ENCODE measurements at regions of chr15 and their contacts with region 1.

Region 1: DNA sequence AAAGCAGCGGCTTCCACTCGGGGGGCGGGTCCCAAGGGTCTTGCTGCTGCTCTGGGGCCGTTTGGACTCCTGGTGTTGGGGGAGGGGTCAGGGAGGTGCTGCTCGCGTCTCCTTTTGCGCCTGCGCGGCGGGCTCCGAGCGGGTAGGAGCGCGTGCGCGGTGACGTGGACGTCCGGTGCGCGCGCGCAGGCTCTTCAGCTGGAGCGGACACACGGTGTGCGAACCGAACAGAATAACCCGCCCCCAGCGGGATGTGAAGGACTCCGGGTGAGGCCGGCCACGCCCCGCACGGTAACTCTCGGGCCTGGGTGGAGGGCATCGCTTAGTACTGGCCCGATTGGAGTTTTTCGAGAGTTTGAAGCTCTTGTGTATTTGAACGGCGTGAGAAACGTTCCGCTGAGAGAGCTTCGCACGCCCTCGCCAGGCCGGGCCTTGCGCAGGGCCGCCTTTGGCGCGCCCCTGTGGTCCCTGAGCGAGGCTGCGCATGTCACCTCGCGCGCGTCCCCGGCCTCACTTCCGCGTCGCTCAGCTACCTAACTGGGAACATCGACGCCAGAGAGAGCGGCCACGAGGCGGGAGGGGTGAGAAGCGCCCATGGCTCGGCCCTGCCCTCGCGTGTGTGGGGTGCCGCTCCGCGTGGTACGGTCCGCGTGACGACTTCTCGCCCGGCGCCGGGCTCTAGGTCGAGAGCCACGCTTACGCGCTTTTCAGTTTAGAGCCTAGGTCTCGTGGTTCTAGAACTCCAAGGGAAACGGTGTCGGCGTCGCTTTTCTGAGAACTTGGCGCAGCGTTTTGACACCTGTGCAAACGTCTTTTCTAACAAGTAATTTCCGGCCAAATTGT is at the start of gene MGA:
- DNase-seq: peak; percentile 86 to 93 (median 91)
- ATAC-seq: peak; percentile 87
- H3K4me3 ChIP-seq: peak within 1 kb of the TSS; percentile 64
- H3K4me3 Mint-ChIP-seq: peak within 1 kb of the TSS; percentile 90 to 100 (median 92)
- H3K27ac ChIP-seq: peak within 1 kb of the TSS; percentile 76
- H3K27ac Mint-ChIP-seq: peak within 1 kb of the TSS; percentile 92 to 98 (median 96)
- H3K4me1 ChIP-seq: peaks cover 20 to 28% of the 10 kb centered on the region in 2 donors
- H3K4me1 Mint-ChIP-seq: peaks cover 16 to 64% (median 47%) of the 10 kb centered on the region in 7 donors
- H3K27me3 ChIP-seq: no peaks in the 10 kb centered on the region
- H3K27me3 Mint-ChIP-seq: peaks cover 0 to 45% (median 0%) of the 10 kb centered on the region in 5 donors
- total RNA-seq, gene MGA: 35.8 to 73.8 (median 47.3) TPM

Region 2: GRCh38 chr15:41331833-41332787 is 328.3 kb before region 1 on chr15 and contains the start of gene OIP5:
- CTCF ChIA-PET with region 1: no interaction called
- POLR2A ChIA-PET with region 1: no interaction called
- intact Hi-C with region 1: loop called in 1 of 2 experiments (anchors 5 kb)
- DNase-seq: peak; percentile 83 to 99 (median 97)
- ATAC-seq: peak; percentile 98
- H3K4me3 ChIP-seq: peak within 1 kb of the TSS; percentile 95
- H3K4me3 Mint-ChIP-seq: peak within 1 kb of the TSS; percentile 87 to 100 (median 97)
- H3K27ac ChIP-seq: peak within 1 kb of the TSS; percentile 52
- H3K27ac Mint-ChIP-seq: peak within 1 kb of the TSS; percentile 77 to 97 (median 91)
- H3K4me1 ChIP-seq: peaks cover 9 to 13% of the 10 kb centered on the region in 2 donors
- H3K4me1 Mint-ChIP-seq: peaks cover 12 to 32% (median 29%) of the 10 kb centered on the region in 7 donors
- H3K27me3 ChIP-seq: no peaks in the 10 kb centered on the region
- H3K27me3 Mint-ChIP-seq: no peaks in the 10 kb centered on the region
- total RNA-seq, gene OIP5: 0.32 to 15.2 (median 0.54) TPM in 4 of 5 experiments, not detected in the other

Region 3: GRCh38 chr15:41544650-41545015 is 115.8 kb before region 1 on chr15:
- CTCF ChIA-PET with region 1: no interaction called
- POLR2A ChIA-PET with region 1: interaction called, 7 read pairs
- intact Hi-C with region 1: loop called in 1 of 2 experiments (anchors 2 kb)
- DNase-seq: peak in 1 of 9 donors; percentile 1
- ATAC-seq: no peak
- H3K4me3 ChIP-seq: peak overlapping the region; percentile 96
- H3K4me3 Mint-ChIP-seq: peak overlapping the region; percentile 92 to 96 (median 94)
- H3K27ac ChIP-seq: peak overlapping the region; percentile 94
- H3K27ac Mint-ChIP-seq: peak overlapping the region in 8 of 9 donors; percentile 62 to 95 (median 92)
- H3K4me1 ChIP-seq: peaks cover 0 to 6% of the 10 kb centered on the region in 2 donors
- H3K4me1 Mint-ChIP-seq: peaks cover 0 to 31% (median 19%) of the 10 kb centered on the region in 7 donors
- H3K27me3 ChIP-seq: no peaks in the 10 kb centered on the region
- H3K27me3 Mint-ChIP-seq: peaks cover 0 to 4% (median 0%) of the 10 kb centered on the region in 5 donors

Region 4: GRCh38 chr15:41621200-41622193 is 39.0 kb before region 1 on chr15:
- CTCF ChIA-PET with region 1: interaction called, 3 read pairs
- POLR2A ChIA-PET with region 1: interaction called, 19 read pairs
- intact Hi-C with region 1: loop called (anchors 1 kb)
- DNase-seq: peak; percentile 56 to 81 (median 78)
- ATAC-seq: peak; percentile 87
- H3K4me3 ChIP-seq: peak overlapping the region; percentile 67
- H3K4me3 Mint-ChIP-seq: peak overlapping the region; percentile 55 to 87 (median 78)
- H3K27ac ChIP-seq: peak overlapping the region; percentile 41
- H3K27ac Mint-ChIP-seq: peak overlapping the region; percentile 68 to 87 (median 77)
- H3K4me1 ChIP-seq: peaks cover 5 to 8% of the 10 kb centered on the region in 2 donors
- H3K4me1 Mint-ChIP-seq: peaks cover 5 to 29% (median 18%) of the 10 kb centered on the region in 7 donors
- H3K27me3 ChIP-seq: no peaks in the 10 kb centered on the region
- H3K27me3 Mint-ChIP-seq: peaks cover 0 to 29% (median 0%) of the 10 kb centered on the region in 5 donors

Region 5: GRCh38 chr15:41703120-41703519 is 42.7 kb after region 1 on chr15:
- CTCF ChIA-PET with region 1: no interaction called
- POLR2A ChIA-PET with region 1: no interaction called
- intact Hi-C with region 1: no loop called
- DNase-seq: no peak
- ATAC-seq: no peak
- H3K4me3 ChIP-seq: no peak overlapping the region
- H3K4me3 Mint-ChIP-seq: no peak overlapping the region
- H3K27ac ChIP-seq: no peak overlapping the region
- H3K27ac Mint-ChIP-seq: no peak overlapping the region
- H3K4me1 ChIP-seq: no peaks in the 10 kb centered on the region
- H3K4me1 Mint-ChIP-seq: peaks cover 0 to 38% (median 29%) of the 10 kb centered on the region in 7 donors
- H3K27me3 ChIP-seq: no peaks in the 10 kb centered on the region
- H3K27me3 Mint-ChIP-seq: no peaks in the 10 kb centered on the region

Region 6: DNA sequence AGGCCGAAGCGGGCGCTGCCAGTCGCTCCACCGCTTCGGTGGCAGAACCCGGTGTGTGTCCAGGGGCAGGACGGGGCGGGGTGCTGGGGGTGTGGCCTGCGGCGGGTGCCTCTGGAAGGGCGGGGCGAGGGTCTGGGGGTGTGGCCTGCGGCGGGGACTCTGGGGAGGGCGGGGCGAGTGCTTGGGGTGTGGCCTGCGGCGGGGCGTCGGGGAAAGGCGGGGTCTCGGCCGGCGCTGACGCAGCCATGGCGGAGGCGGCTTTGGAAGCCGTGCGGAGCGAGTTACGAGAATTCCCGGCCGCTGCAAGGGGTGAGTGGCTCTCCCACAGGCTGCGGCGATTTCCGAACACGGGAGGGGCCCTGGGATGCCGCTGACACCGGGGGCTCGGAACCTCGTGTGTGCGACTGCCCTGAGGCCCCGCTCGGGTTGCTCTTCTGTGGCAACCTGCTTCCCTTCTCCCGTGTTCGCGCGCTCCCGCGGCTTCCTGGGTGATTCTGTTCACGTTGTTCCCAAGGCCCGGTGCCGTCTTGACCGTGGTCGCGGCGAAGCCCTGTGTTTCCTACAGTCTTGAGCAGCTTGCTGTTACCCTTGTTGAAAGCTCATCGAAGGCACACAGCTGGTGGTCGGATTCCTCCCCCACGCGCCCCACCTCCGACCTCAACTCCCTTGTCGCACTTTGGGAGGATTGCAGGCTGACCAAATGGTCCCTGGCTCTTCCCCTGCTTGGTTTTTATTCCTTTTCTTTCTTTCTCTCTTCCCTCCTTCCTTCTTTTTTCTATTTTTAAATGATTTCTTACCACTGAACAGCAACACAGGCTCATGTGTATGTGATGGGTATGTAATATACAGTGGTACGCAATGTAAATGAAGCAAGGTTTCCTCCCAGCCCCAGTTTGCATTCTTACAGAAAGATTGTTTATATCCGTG is 167.7 kb after region 1 on chr15 and contains the start of gene JMJD7:
- CTCF ChIA-PET with region 1: no interaction called
- POLR2A ChIA-PET with region 1: interaction called, 4 read pairs
- intact Hi-C with region 1: loop called in 1 of 2 experiments (anchors 1 kb)
- DNase-seq: peak; percentile 81 to 98 (median 91)
- ATAC-seq: peak; percentile 99
- H3K4me3 ChIP-seq: peak within 1 kb of the TSS; percentile 99
- H3K4me3 Mint-ChIP-seq: peak within 1 kb of the TSS; percentile 86 to 99 (median 96)
- H3K27ac ChIP-seq: peak within 1 kb of the TSS; percentile 94
- H3K27ac Mint-ChIP-seq: peak within 1 kb of the TSS; percentile 78 to 96 (median 92)
- H3K4me1 ChIP-seq: peaks cover 26 to 38% of the 10 kb centered on the region in 2 donors
- H3K4me1 Mint-ChIP-seq: peaks cover 34 to 53% (median 50%) of the 10 kb centered on the region in 7 donors
- H3K27me3 ChIP-seq: no peaks in the 10 kb centered on the region
- H3K27me3 Mint-ChIP-seq: peaks cover 0 to 3% (median 0%) of the 10 kb centered on the region in 5 donors
- total RNA-seq, gene JMJD7: 25.3 to 83.7 (median 52.1) TPM

Region 7: GRCh38 chr15:42920519-42921227 is 1260.2 kb after region 1 on chr15 and contains the start of gene TTBK2:
- CTCF ChIA-PET with region 1: no interaction called
- POLR2A ChIA-PET with region 1: no interaction called
- intact Hi-C with region 1: loop called in 1 of 2 experiments (anchors 1 kb)
- DNase-seq: peak; percentile 93 to 98 (median 97)
- ATAC-seq: peak; percentile 98
- H3K4me3 ChIP-seq: peak within 1 kb of the TSS; percentile 89
- H3K4me3 Mint-ChIP-seq: peak within 1 kb of the TSS; percentile 93 to 100 (median 97)
- H3K27ac ChIP-seq: peak within 1 kb of the TSS; percentile 71
- H3K27ac Mint-ChIP-seq: peak within 1 kb of the TSS; percentile 88 to 97 (median 95)
- H3K4me1 ChIP-seq: peaks cover 4 to 5% of the 10 kb centered on the region in 2 donors
- H3K4me1 Mint-ChIP-seq: peaks cover 14 to 40% (median 29%) of the 10 kb centered on the region in 7 donors
- H3K27me3 ChIP-seq: no peaks in the 10 kb centered on the region
- H3K27me3 Mint-ChIP-seq: peaks cover 0 to 3% (median 0%) of the 10 kb centered on the region in 5 donors
- total RNA-seq, gene TTBK2: 15.7 to 30.5 (median 28.8) TPM